MCF 10A (cell line): ENCODE measurements at regions of chr3 and their contacts with region 1.

Region 1: GRCh38 chr3:131535596-131535995 is 32.8 kb upstream of the MRPL3 start:
- DNase-seq: peak; percentile 69
- H3K4me3 Mint-ChIP-seq: no peak overlapping the region
- H3K27ac Mint-ChIP-seq: no peak overlapping the region
- H3K4me1 Mint-ChIP-seq: peaks cover 13% of the 10 kb centered on the region
- H3K27me3 Mint-ChIP-seq: peaks cover 24% of the 10 kb centered on the region
- CTCF ChIP-seq: no peak

Region 2: GRCh38 chr3:131053043-131053859 is 482.3 kb before region 1 on chr3:
- CTCF ChIA-PET with region 1: no interaction called
- POLR2A ChIA-PET with region 1: no interaction called
- intact Hi-C with region 1: loop called (anchors 10 kb)
- DNase-seq: no peak
- H3K4me3 Mint-ChIP-seq: no peak overlapping the region
- H3K27ac Mint-ChIP-seq: no peak overlapping the region
- H3K4me1 Mint-ChIP-seq: no peaks in the 10 kb centered on the region
- H3K27me3 Mint-ChIP-seq: no peaks in the 10 kb centered on the region
- CTCF ChIP-seq: peak; percentile 11

Region 3: DNA sequence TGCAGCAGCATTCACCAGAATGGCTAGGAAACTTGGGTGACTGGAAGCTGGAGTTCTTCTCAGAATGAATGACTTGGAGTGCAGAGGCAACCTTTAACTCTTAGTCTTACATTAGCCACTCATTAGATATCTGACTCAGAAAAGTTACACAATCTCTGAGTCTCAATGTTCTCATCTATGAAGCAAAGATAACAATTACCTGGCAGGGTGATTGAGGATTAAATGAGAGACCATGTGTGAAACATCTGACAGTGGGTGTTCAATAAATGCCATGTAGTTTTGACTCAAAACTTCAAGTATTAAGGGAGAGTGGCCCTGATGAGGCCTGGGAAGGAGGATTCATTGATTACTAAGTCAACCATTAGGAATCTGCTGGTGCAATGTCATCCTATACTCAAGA is 81.1 kb before region 1 on chr3:
- CTCF ChIA-PET with region 1: no interaction called
- POLR2A ChIA-PET with region 1: no interaction called
- intact Hi-C with region 1: no loop called
- DNase-seq: peak; percentile 62
- H3K4me3 Mint-ChIP-seq: no peak overlapping the region
- H3K27ac Mint-ChIP-seq: no peak overlapping the region
- H3K4me1 Mint-ChIP-seq: peaks cover 12% of the 10 kb centered on the region
- H3K27me3 Mint-ChIP-seq: no peaks in the 10 kb centered on the region
- CTCF ChIP-seq: no peak

Region 4: GRCh38 chr3:132378048-132378762 is 842.6 kb after region 1 on chr3:
- CTCF ChIA-PET with region 1: no interaction called
- POLR2A ChIA-PET with region 1: no interaction called
- intact Hi-C with region 1: no loop called
- DNase-seq: no peak
- H3K4me3 Mint-ChIP-seq: no peak overlapping the region
- H3K27ac Mint-ChIP-seq: no peak overlapping the region
- H3K4me1 Mint-ChIP-seq: no peaks in the 10 kb centered on the region
- H3K27me3 Mint-ChIP-seq: no peaks in the 10 kb centered on the region
- CTCF ChIP-seq: no peak